Activated CD8-positive, alpha-beta memory T cell treated with anti-CD3 and anti-CD28 coated beads, Interleukin-2, amount 10 ng/mL, durations not matched to agents 7 days and 5 days (primary cell): ENCODE measurements at regions of chr5 and their contacts with region 1.

Region 1: GRCh38 chr5:151126199-151126645 is 31.4 kb downstream of the ANXA6 start:
- DNase-seq: peak; percentile 75
- ATAC-seq: peak; percentile 63
- H3K4me3 Mint-ChIP-seq: no peak overlapping the region
- H3K27ac Mint-ChIP-seq: peak overlapping the region; percentile 75
- H3K4me1 Mint-ChIP-seq: peaks cover 39% of the 10 kb centered on the region
- H3K27me3 Mint-ChIP-seq: no peaks in the 10 kb centered on the region

Region 2: GRCh38 chr5:150946351-150946905 is 179.8 kb before region 1 on chr5:
- CTCF ChIA-PET with region 1: no interaction called
- DNase-seq: no peak
- ATAC-seq: no peak
- H3K4me3 Mint-ChIP-seq: no peak overlapping the region
- H3K27ac Mint-ChIP-seq: no peak overlapping the region
- H3K4me1 Mint-ChIP-seq: no peaks in the 10 kb centered on the region
- H3K27me3 Mint-ChIP-seq: no peaks in the 10 kb centered on the region

Region 3: GRCh38 chr5:151097786-151098498 is 28.3 kb before region 1 on chr5:
- CTCF ChIA-PET with region 1: interaction called, 15 read pairs
- DNase-seq: peak; percentile 82
- ATAC-seq: peak; percentile 74
- H3K4me3 Mint-ChIP-seq: peak overlapping the region; percentile 49
- H3K27ac Mint-ChIP-seq: peak overlapping the region; percentile 62
- H3K4me1 Mint-ChIP-seq: peaks cover 83% of the 10 kb centered on the region
- H3K27me3 Mint-ChIP-seq: no peaks in the 10 kb centered on the region

Region 4: GRCh38 chr5:151157426-151158286 is 31.4 kb after region 1 on chr5 and contains the start of gene ANXA6:
- CTCF ChIA-PET with region 1: interaction called, 260 read pairs
- DNase-seq: peak; percentile 81
- ATAC-seq: peak; percentile 79
- H3K4me3 Mint-ChIP-seq: peak within 1 kb of the TSS; percentile 94
- H3K27ac Mint-ChIP-seq: peak within 1 kb of the TSS; percentile 94
- H3K4me1 Mint-ChIP-seq: peaks cover 36% of the 10 kb centered on the region
- H3K27me3 Mint-ChIP-seq: no peaks in the 10 kb centered on the region
- total RNA-seq, gene ANXA6: 623 to 640 TPM

Region 5: DNA sequence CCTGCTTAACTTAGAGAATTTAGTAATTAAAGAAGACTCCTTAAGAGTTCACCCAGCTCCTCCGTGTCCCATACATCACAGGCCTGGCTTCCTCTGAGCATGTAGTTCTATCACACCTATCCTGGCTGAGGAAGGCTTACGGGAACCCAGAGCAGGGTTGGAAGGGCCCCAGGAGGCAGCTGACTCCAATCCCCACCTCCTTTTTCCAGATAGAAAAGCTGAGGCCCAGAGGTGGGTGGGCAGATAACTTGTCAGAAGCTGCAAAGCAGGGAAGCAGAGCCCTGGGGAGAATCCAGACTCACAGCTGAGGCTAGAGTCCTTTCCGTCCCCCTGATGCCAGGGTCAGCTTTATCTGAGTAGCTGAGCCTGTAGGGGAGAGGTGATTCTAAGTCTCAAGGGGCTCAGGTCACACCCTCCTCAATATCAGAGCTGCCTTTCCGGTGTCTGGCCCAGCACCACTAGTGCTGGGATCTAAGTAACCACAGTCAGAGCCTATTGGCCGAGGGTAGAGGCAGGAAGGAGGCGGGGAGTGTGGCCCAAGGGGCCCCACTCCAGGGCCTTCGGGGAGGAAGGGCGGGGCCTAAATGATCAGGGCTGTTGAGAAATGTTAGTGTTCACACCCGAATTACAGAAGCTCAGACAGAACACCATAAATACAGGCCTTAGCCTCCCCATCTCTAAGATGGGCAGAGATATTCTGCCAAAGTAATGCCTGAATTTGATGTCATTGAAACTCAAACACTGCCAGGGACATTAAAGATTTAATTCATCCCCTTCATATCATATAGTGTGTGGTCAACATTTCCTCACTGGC is 87.8 kb after region 1 on chr5:
- CTCF ChIA-PET with region 1: interaction called, 15 read pairs
- DNase-seq: peak; percentile 96
- ATAC-seq: peak; percentile 86
- H3K4me3 Mint-ChIP-seq: peak overlapping the region; percentile 86
- H3K27ac Mint-ChIP-seq: peak overlapping the region; percentile 98
- H3K4me1 Mint-ChIP-seq: peaks cover 78% of the 10 kb centered on the region
- H3K27me3 Mint-ChIP-seq: no peaks in the 10 kb centered on the region

Region 6: DNA sequence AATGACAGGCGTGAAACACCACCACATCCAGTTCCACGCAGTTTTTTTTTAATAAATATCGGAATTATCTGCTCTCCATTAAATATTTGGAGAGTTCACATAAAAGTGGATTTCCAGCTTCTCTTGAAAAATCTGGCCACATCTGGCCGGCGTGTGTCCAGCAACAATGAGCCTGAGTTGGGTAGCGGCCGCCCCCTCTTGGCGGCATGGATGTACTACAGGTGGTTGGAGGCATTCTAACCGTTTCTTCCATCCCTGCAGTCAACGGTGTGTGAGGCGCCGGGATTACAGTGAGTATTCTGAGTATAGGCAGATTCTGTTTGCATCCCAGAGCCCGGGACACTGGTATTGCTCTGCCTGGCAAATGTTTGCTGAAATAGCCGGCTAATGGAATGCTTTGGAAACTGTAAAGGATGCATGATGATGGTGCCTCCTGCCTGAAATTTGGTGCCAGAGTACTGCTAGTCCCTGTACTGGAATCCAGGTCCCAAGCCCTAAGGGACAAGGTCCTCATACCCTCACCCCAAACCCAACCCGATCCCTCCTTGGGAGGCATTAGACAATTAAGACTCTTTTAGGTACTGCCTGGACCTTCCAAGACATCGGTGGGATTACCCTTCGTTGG is 113.1 kb after region 1 on chr5:
- CTCF ChIA-PET with region 1: interaction called, 40 read pairs
- DNase-seq: peak; percentile 73
- ATAC-seq: peak; percentile 73
- H3K4me3 Mint-ChIP-seq: peak overlapping the region; percentile 63
- H3K27ac Mint-ChIP-seq: peak overlapping the region; percentile 33
- H3K4me1 Mint-ChIP-seq: peaks cover 56% of the 10 kb centered on the region
- H3K27me3 Mint-ChIP-seq: no peaks in the 10 kb centered on the region

Region 7: DNA sequence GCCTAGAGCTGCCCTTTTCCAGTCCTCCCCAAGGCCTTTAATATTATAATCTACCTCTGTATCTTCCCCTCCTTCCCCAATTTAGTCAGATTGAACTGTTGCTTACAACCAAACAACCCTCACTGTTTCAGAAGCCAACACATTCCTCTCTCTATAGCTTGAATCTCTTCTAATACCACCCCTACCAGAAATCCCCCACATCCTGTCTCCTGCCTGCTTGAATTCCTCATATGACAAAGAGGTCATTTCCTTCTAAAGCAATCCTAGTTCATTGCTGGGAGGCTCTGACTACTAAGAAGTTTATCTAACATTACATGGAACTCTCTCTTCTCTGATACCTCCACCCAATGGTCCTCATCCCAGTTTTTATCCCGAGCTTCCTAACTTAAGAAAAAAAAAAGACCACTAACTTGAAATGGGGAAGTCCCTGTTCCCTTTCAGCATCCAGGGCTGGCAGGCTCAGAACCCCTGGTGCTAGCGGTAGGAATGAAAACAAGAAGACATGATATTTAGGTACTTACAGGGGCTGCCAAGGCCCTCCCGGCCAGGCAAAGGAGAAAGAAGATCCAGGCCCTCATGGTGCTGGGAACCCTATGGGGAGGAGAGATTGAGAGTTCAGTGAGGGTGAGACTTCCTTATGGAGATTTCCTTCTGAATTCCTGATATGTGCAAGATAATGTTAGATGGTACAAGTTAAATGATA is 549.5 kb after region 1 on chr5:
- CTCF ChIA-PET with region 1: no interaction called
- DNase-seq: no peak
- ATAC-seq: no peak
- H3K4me3 Mint-ChIP-seq: no peak overlapping the region
- H3K27ac Mint-ChIP-seq: no peak overlapping the region
- H3K4me1 Mint-ChIP-seq: peaks cover 3% of the 10 kb centered on the region
- H3K27me3 Mint-ChIP-seq: peaks cover 6% of the 10 kb centered on the region